Spleen (tissue), 13 donors: ENCODE measurements at regions of chr2 and their contacts with region 1.

Region 1: GRCh38 chr2:69717861-69718273 is 24.1 kb upstream of the ANXA4 start:
- DNase-seq: no peak
- H3K4me3 ChIP-seq: no peak overlapping the region
- H3K27ac ChIP-seq: no peak overlapping the region
- H3K4me1 ChIP-seq: peaks cover 0 to 20% (median 8%) of the 10 kb centered on the region in 6 donors
- H3K27me3 ChIP-seq: peaks cover 0 to 11% (median 0%) of the 10 kb centered on the region in 7 donors
- CTCF ChIP-seq: no peak
- POLR2A ChIP-seq: no peak

Region 2: GRCh38 chr2:69436938-69437750 is 280.7 kb before region 1 on chr2 and contains the start of gene NFU1:
- intact Hi-C with region 1: loop called (anchors 10 kb)
- DNase-seq: peak; percentile 98
- H3K4me3 ChIP-seq: peak within 1 kb of the TSS; percentile 52 to 87 (median 74)
- H3K27ac ChIP-seq: peak within 1 kb of the TSS; percentile 84 to 99 (median 96)
- H3K4me1 ChIP-seq: peaks cover 3 to 55% (median 33%) of the 10 kb centered on the region in 6 donors
- H3K27me3 ChIP-seq: no peaks in the 10 kb centered on the region
- CTCF ChIP-seq: peak; percentile 67 to 90 (median 84)
- POLR2A ChIP-seq: peak in 2 of 3 donors; percentile 15 to 18
- total RNA-seq, gene NFU1: 24.8 to 36.2 (median 27.8) TPM

Region 3: GRCh38 chr2:69559442-69560146 is 158.3 kb before region 1 on chr2:
- intact Hi-C with region 1: loop called (anchors 5 kb)
- DNase-seq: no peak
- H3K4me3 ChIP-seq: no peak overlapping the region
- H3K27ac ChIP-seq: no peak overlapping the region
- H3K4me1 ChIP-seq: peaks cover 3 to 83% (median 19%) of the 10 kb centered on the region in 6 donors
- H3K27me3 ChIP-seq: no peaks in the 10 kb centered on the region
- CTCF ChIP-seq: peak; percentile 22 to 71 (median 62)
- POLR2A ChIP-seq: no peak